ENCODE measurements at regions of chr2 and their contacts with region 1.

Region 1: DNA sequence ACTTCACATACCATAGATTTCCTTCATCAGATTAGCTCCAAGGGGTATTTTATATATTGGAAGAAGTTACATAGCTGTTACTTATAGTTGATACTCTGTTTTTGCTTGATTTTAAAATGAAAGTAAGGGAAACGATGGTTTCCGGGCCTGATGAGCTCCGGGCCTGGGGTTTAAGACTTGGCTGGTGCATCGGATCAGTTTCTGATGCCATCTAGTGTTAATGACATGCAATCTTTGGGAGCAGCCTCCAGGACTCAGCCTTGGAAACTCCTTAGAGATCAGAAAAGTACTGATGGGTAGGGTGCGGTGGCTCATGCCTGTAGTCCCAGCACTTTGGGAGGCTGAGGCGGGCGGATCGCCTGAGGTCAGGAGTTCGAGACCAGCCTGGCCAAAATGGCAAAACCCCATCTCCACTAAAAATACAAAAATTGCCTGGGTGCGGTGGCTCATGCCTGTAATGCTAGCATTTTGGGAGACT is 47.1 kb upstream of the CNOT11 start:
- DNase-seq: peak in 1 of 2 donors; percentile 68
- ATAC-seq: peak; percentile 90
- H3K4me3 ChIP-seq: no peak overlapping the region
- H3K27ac ChIP-seq: no peak overlapping the region
- H3K4me1 ChIP-seq: no peaks in the 10 kb centered on the region
- H3K27me3 ChIP-seq: no peaks in the 10 kb centered on the region

Region 2: GRCh38 chr2:101012706-101013181 is 192.8 kb before region 1 on chr2:
- intact Hi-C with region 1: loop called (anchors 2 kb)
- DNase-seq: no peak
- ATAC-seq: peak; percentile 56
- H3K4me3 ChIP-seq: no peak overlapping the region
- H3K27ac ChIP-seq: no peak overlapping the region
- H3K4me1 ChIP-seq: no peaks in the 10 kb centered on the region
- H3K27me3 ChIP-seq: no peaks in the 10 kb centered on the region

Region 3: DNA sequence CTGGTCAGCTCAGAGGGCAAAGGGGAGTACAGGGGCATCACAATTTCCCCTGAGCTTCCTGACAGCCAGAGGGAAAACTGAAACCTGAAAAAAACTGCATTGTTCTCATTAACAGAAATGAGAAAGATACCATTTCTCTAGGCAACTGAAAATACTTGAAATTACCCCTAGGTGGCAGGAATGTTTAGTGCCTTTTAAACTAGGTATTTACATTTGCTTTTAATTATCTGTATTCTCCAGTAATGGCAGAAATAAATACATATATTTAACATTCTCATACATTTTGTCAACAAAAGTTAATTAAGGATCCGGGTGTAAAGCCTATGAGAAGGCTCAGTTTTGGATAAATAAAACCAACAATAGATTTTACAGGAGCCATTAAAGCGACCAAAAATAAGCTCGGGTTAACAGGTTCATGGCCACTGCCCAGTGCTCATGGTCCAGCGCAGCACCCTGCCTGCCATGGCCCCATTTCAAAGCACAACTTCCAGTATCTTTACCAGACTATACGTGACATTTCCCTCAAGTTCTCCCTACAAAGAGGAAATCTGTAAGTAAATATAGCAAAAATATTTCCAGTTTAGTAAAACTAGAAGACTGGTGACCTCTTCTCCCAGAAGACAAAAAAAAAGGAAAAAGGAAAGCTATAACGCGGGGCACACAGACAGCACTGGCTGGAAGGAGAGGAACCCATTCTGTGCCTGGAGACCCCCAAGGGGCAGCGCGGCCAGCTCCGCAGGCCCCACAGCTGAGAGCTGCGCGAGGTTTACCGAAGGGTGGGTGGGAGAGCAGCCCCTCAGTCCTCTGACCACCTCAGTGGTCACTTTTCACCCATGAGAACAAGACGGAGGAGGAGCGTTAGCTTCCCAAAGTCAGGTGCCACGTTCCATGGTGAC is 168.8 kb before region 1 on chr2:
- intact Hi-C with region 1: loop called (anchors 2 to 5 kb)
- DNase-seq: no peak
- ATAC-seq: no peak
- H3K4me3 ChIP-seq: no peak overlapping the region
- H3K27ac ChIP-seq: no peak overlapping the region
- H3K4me1 ChIP-seq: no peaks in the 10 kb centered on the region
- H3K27me3 ChIP-seq: no peaks in the 10 kb centered on the region

Region 4: GRCh38 chr2:101162561-101163330 is 42.8 kb before region 1 on chr2:
- intact Hi-C with region 1: no loop called
- DNase-seq: no peak
- ATAC-seq: no peak
- H3K4me3 ChIP-seq: no peak overlapping the region
- H3K27ac ChIP-seq: no peak overlapping the region
- H3K4me1 ChIP-seq: no peaks in the 10 kb centered on the region
- H3K27me3 ChIP-seq: no peaks in the 10 kb centered on the region